B cell (primary cell): ENCODE measurements at regions of chr12 and their contacts with region 1.

Region 1: GRCh38 chr12:122225683-122226407 is at the start of gene DIABLO:
- DNase-seq: peak; percentile 100
- ATAC-seq: peak; percentile 93
- H3K4me3 ChIP-seq: peak within 1 kb of the TSS; percentile 51 to 98 (median 90)
- H3K4me3 Mint-ChIP-seq: peak within 1 kb of the TSS; percentile 94
- H3K27ac ChIP-seq: peak within 1 kb of the TSS; percentile 94 to 97
- H3K27ac Mint-ChIP-seq: peak within 1 kb of the TSS; percentile 96
- H3K4me1 ChIP-seq: peaks cover 19 to 21% of the 10 kb centered on the region in 2 donors
- H3K4me1 Mint-ChIP-seq: peaks cover 34% of the 10 kb centered on the region
- H3K27me3 ChIP-seq: no peaks in the 10 kb centered on the region
- H3K27me3 Mint-ChIP-seq: no peaks in the 10 kb centered on the region
- CTCF ChIP-seq: no peak
- total RNA-seq, gene DIABLO: 42.8 and 44.6 TPM in 2 replicates

Region 2: GRCh38 chr12:121279507-121279915 is 946.3 kb before region 1 on chr12:
- CTCF ChIA-PET with region 1: no interaction called
- POLR2A ChIA-PET with region 1: interaction called, 10 read pairs
- intact Hi-C with region 1: no loop called
- DNase-seq: no peak
- ATAC-seq: no peak
- H3K4me3 ChIP-seq: no peak overlapping the region
- H3K4me3 Mint-ChIP-seq: no peak overlapping the region
- H3K27ac ChIP-seq: no peak overlapping the region
- H3K27ac Mint-ChIP-seq: no peak overlapping the region
- H3K4me1 ChIP-seq: no peaks in the 10 kb centered on the region
- H3K4me1 Mint-ChIP-seq: peaks cover 8% of the 10 kb centered on the region
- H3K27me3 ChIP-seq: no peaks in the 10 kb centered on the region
- H3K27me3 Mint-ChIP-seq: no peaks in the 10 kb centered on the region
- CTCF ChIP-seq: no peak

Region 3: GRCh38 chr12:122265931-122266771 is 40.3 kb after region 1 on chr12 and contains the start of gene VPS33A:
- CTCF ChIA-PET with region 1: no interaction called
- POLR2A ChIA-PET with region 1: interaction called, 10 read pairs
- intact Hi-C with region 1: loop called (anchors 1 kb)
- DNase-seq: peak; percentile 96
- ATAC-seq: peak; percentile 82
- H3K4me3 ChIP-seq: peak within 1 kb of the TSS; percentile 70 to 96 (median 91)
- H3K4me3 Mint-ChIP-seq: peak within 1 kb of the TSS; percentile 99
- H3K27ac ChIP-seq: peak within 1 kb of the TSS; percentile 89 to 97
- H3K27ac Mint-ChIP-seq: peak within 1 kb of the TSS; percentile 100
- H3K4me1 ChIP-seq: peaks cover 9 to 14% of the 10 kb centered on the region in 2 donors
- H3K4me1 Mint-ChIP-seq: peaks cover 23% of the 10 kb centered on the region
- H3K27me3 ChIP-seq: no peaks in the 10 kb centered on the region
- H3K27me3 Mint-ChIP-seq: no peaks in the 10 kb centered on the region
- CTCF ChIP-seq: no peak
- total RNA-seq, gene VPS33A: 34.6 and 34.9 TPM in 2 replicates